ENCODE measurements at regions of chr13 and their contacts with region 1.

Region 1: DNA sequence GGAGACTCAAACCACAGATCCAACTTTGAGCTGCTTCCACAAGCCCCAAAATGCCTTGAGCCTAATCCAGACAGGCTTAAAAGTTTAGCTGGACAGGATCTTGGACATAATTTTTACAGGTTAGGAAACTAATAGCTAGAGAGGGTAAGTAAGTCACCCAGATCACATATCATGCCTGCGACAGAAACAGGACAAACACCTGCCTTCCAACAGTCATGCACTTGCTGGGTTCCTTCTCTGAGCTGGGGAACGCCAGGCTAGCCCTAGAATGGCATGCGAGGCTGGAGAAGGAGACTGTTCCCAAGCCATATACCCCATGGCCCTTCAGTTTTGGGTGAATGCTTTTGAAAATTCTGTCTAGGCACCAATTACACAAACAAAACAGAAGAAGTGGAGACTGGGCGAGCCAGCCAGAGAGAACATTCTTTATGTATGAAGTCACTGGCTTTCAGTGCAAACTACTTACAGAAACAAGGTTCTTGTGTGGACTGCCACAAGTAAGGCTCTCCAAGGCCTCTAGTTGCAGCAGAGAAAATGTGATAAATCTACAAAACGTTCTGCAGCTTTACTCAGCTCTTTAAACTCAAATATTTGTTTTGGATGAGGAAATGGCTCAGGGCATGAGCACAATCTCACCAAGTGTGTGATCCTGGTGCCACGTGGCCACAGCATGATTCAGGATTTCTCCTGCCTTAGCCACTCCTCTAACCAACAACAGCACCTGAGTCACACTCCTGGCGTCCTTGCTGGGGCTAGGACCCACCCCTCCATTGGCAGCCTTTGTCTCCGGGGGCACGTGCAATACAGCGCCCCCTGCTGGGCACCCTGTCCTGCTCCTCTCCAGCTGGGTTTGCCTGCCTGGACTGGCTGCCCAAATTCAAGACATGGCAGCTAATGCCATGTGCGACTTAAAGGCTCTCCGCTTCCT is 73.4 kb upstream of the UBL3 start:
- DNase-seq: peak; percentile 75
- H3K4me3 Mint-ChIP-seq: no peak overlapping the region
- H3K27ac Mint-ChIP-seq: no peak overlapping the region
- H3K4me1 Mint-ChIP-seq: peaks cover 19% of the 10 kb centered on the region
- H3K27me3 Mint-ChIP-seq: no peaks in the 10 kb centered on the region

Region 2: DNA sequence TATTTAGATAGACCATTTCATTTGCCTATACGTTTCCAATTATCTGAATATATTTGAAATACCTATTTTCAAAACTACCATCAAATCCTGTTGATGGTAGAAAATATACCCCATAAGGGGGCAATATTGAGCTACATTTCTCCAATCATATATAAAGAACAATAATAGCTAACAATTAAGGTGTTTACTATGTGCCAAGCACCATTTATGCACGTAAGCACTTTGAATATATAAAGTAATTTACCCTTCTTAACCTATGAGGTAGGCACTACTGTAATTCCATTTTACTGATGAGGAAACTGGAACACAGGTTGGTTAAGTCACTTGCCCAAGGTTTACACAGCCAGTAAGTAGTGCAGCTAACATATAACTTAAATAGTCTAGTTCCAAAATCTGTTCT is 152.6 kb before region 1 on chr13:
- CTCF ChIA-PET with region 1: interaction called, 23 read pairs
- intact Hi-C with region 1: loop called (anchors 1 kb)
- DNase-seq: no peak
- H3K4me3 Mint-ChIP-seq: no peak overlapping the region
- H3K27ac Mint-ChIP-seq: no peak overlapping the region
- H3K4me1 Mint-ChIP-seq: peaks cover 2% of the 10 kb centered on the region
- H3K27me3 Mint-ChIP-seq: no peaks in the 10 kb centered on the region

Measured in activated naive CD4-positive, alpha-beta T cell treated with anti-CD3 and anti-CD28 coated beads for 36 hours (primary cell).